ENCODE measurements at regions of chr22 and their contacts with region 1.

Region 1: GRCh38 chr22:39343259-39344048 is 6.3 kb upstream of the SYNGR1 start:
- DNase-seq: peak; percentile 75
- H3K4me3 Mint-ChIP-seq: no peak overlapping the region
- H3K27ac Mint-ChIP-seq: no peak overlapping the region
- H3K4me1 Mint-ChIP-seq: no peaks in the 10 kb centered on the region
- H3K27me3 Mint-ChIP-seq: no peaks in the 10 kb centered on the region

Region 2: DNA sequence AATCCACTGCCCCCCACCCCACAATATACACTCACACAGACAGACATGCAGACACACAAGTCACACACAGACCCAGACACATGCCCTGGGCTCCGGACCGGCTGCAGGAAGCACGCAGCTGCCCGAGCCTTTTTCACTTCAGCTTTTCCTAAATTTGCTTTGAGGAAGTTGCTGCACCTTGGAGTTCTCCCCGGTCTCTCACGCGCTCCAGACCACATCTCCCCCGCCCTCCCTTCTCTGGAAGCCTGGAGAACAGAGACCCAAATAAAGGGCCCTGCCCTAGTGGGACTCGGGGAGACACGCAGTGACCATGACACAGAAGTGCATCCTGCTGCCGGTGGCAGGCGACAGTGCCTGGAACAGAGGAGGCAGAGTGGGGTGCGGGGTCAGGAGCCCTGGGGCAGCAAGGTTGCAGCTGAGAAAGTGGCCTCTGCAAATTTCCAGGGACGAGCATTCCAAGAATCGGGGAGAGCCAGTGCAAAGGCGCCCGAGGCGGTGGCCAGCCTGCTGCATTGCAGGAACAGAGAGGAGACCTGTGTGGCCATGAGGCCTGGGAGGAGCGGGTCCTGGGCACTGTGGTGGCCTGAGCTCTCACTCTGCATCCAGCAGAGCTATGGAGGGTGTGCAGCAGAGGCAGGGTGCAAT is 43.1 kb before region 1 on chr22:
- CTCF ChIA-PET with region 1: no interaction called
- intact Hi-C with region 1: no loop called
- DNase-seq: no peak
- H3K4me3 Mint-ChIP-seq: no peak overlapping the region
- H3K27ac Mint-ChIP-seq: no peak overlapping the region
- H3K4me1 Mint-ChIP-seq: peaks cover 3% of the 10 kb centered on the region
- H3K27me3 Mint-ChIP-seq: peaks cover 24% of the 10 kb centered on the region

Region 3: GRCh38 chr22:39332441-39333064 is 10.9 kb before region 1 on chr22:
- CTCF ChIA-PET with region 1: interaction called, 16 read pairs
- intact Hi-C with region 1: no loop called
- DNase-seq: no peak
- H3K4me3 Mint-ChIP-seq: no peak overlapping the region
- H3K27ac Mint-ChIP-seq: peak overlapping the region; percentile 13
- H3K4me1 Mint-ChIP-seq: peaks cover 19% of the 10 kb centered on the region
- H3K27me3 Mint-ChIP-seq: no peaks in the 10 kb centered on the region

Region 4: DNA sequence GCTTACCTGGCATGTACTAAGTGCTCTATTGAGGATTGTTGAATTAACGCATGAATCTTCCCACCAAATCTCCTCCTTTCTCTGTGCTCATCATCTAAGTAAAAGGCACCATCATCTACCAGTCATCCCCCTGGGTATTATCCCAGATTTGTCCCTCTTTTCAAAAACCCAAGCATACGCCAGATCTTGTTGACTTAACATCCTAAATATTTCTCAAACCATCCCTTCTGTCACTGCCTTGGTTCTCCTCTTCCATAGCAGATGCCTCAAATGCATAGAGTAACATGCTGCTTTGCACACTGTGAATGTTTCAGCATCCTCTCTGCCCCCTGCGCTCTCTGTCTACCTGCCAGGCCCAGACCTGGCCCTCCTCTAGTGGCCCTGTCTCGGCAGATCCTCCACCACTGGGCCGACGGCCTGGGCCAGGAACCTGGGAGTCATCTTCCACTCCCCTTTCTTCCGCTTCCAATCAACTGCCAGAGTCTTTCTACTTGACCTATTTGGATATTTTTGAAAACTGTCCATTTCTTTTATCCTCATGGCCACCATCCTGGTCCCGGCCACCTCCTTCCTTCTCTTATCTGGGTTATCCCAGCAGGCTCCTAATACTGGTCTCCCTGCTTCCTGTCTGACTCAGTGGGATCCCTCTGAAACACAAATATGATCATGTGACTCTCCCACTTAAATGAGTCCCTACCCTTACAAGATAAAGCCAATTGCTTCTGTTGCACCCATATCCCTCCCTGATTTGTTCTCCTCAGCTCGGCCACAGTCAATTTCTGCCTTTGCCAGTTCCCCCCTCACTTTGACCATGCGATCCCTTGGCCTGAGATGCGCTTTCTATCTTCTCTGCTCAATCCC is 52.7 kb after region 1 on chr22:
- CTCF ChIA-PET with region 1: interaction called, 3 read pairs
- intact Hi-C with region 1: loop called (anchors 5 kb)
- DNase-seq: no peak
- H3K4me3 Mint-ChIP-seq: no peak overlapping the region
- H3K27ac Mint-ChIP-seq: no peak overlapping the region
- H3K4me1 Mint-ChIP-seq: peaks cover 7% of the 10 kb centered on the region
- H3K27me3 Mint-ChIP-seq: no peaks in the 10 kb centered on the region